Motor neuron (in vitro differentiated cells): ENCODE measurements at regions of chr5 and their contacts with region 1.

Region 1: DNA sequence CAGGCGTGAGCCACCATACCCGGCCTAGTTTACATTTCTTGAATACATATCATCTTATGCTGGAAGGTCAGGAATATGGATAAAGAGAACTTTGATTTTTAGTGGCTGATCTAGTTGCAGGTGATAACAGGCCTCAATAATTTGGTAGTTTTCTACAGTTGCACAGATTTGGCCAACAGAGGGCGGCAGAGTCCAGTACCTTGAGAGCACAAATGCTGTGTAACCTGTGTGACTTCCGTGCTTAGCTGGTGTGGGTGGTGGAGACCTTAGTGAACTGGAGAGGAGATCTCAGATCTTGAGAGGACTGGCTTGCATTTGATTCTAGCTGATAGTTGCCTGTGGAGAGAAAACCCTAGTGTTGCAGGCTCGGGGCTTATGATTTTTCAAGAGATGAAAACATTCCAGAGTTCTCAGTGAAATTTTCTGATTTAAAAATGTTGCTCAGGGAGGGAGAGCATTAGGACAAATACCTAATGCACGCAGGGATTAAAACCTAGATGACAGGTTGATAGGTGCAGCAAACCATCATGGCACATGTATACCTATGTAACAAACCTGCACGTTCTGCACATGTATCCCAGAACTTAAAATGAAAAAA is 17.4 kb upstream of the GPR151 start:
- ATAC-seq: peak; percentile 69 to 94 (median 81)
- H3K4me3 ChIP-seq: no peak overlapping the region
- H3K27ac ChIP-seq: no peak overlapping the region
- H3K4me1 ChIP-seq: peaks cover 2 to 4% of the 10 kb centered on the region in 2 donors

Region 2: GRCh38 chr5:145495741-145496140 is 1037.6 kb before region 1 on chr5:
- in situ Hi-C with region 1: no loop called
- ATAC-seq: peak in 7 of 8 experiments; percentile 80 to 93 (median 86)
- H3K4me3 ChIP-seq: no peak overlapping the region
- H3K27ac ChIP-seq: no peak overlapping the region
- H3K4me1 ChIP-seq: peaks cover 6 to 14% of the 10 kb centered on the region in 2 donors

Region 3: DNA sequence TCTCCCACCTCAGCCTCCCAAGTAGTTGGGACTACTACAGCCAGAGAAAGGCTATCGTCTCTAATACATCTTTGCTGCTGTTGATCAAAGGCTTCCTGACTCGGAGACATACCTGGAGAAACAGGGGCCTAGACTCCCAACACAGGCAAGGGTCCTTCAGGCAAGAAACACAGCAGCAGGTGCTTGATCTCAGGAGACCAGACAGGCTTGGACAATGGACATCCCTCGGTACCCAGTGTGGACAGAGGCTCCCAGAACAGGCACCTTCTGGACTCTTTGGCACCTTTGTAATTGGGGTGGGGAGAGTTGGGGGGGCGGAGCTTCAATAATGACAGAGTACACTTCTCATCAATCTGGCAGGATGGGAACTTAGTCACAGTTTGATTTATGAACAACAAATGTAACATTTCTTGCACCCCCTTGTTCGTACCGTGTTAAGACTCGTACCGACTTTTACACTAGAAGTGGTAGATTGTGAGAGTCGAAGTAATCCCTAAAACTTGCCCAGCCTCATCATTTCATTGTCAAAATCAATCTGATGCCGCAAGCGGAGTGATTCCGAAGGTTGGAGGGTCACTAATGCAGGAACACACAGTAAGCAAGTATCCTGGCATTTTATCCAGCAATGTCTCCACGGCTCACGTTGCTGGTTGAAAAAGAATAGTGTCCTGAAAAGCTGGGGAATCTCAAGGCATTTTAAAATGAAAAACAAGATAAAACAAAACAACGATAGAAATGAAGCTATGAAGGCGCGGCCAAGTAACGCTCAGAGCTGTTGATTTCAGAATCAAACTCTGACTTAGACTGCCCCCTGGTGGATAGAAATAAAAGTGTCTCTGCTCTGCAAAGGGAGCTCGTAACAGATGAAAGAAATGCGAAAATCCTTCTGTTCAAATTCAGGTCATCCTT is 655.1 kb after region 1 on chr5:
- in situ Hi-C with region 1: loop called (anchors 25 kb)
- ATAC-seq: peak; percentile 56 to 78 (median 71)
- H3K4me3 ChIP-seq: no peak overlapping the region
- H3K27ac ChIP-seq: no peak overlapping the region
- H3K4me1 ChIP-seq: peaks cover 12 to 16% of the 10 kb centered on the region in 2 donors